BJ (cell line): ENCODE measurements at regions of chr1 and their contacts with region 1.

Region 1: GRCh38 chr1:7042322-7043190 is 257.3 kb downstream of the CAMTA1 start:
- DNase-seq: no peak
- H3K4me3 ChIP-seq: no peak overlapping the region
- H3K27me3 ChIP-seq: peaks cover 2% of the 10 kb centered on the region
- CTCF ChIP-seq: peak; percentile 52

Region 2: DNA sequence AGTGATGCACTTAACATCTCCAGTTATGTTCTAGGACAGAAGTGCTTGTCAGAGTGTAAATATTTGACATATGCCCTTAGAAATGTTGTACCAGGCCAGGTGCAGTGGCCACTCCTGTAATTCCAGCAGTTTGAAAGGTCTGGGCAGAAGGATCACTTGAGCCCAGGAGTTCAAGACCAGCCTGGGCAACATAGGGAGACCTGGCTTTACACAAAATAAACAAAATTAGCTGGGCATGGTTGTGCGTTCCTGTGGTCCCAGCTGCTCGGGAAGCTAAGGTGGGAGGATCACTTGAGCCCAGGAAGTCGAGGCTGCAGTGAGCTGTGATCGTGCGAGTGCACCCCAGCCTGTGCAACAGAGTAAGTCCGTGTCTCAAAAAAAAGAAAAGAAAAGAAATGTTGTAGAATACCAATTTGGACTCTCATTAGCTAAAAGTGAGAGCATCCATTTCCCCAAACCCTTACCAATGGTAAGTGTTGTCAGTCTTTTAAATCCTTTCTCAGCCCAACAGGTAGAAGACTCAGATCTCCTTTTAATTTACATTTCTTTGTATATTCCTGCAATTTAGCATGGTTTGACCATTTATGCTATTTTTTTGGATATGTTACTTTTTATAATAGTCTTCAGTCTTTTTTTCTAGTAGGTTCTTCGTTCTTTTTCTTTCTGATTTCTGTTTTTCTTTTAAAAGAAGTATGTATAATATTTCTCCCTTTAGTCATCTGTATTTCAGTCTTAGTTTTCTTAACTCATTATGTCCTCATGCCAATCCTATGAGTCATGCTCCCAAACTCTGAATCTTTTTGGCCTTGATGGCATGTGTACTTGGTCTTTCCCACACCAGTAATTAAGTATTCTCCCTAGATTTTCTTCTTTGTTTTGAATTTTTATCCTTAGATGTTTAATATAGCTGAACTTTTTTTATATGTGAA is 182.9 kb before region 1 on chr1:
- CTCF ChIA-PET with region 1: no interaction called
- POLR2A ChIA-PET with region 1: no interaction called
- DNase-seq: peak; percentile 92
- H3K4me3 ChIP-seq: no peak overlapping the region
- H3K27me3 ChIP-seq: no peaks in the 10 kb centered on the region
- CTCF ChIP-seq: no peak

Region 3: GRCh38 chr1:7013833-7014639 is 28.5 kb before region 1 on chr1:
- CTCF ChIA-PET with region 1: no interaction called
- POLR2A ChIA-PET with region 1: no interaction called
- DNase-seq: no peak
- H3K4me3 ChIP-seq: no peak overlapping the region
- H3K27me3 ChIP-seq: no peaks in the 10 kb centered on the region
- CTCF ChIP-seq: no peak

Region 4: GRCh38 chr1:7026169-7026568 is 16.4 kb before region 1 on chr1:
- CTCF ChIA-PET with region 1: interaction called, 19 read pairs
- POLR2A ChIA-PET with region 1: no interaction called
- DNase-seq: no peak
- H3K4me3 ChIP-seq: no peak overlapping the region
- H3K27me3 ChIP-seq: no peaks in the 10 kb centered on the region
- CTCF ChIP-seq: no peak

Region 5: GRCh38 chr1:7207875-7208646 is 165.5 kb after region 1 on chr1:
- CTCF ChIA-PET with region 1: interaction called, 20 read pairs
- POLR2A ChIA-PET with region 1: no interaction called
- DNase-seq: no peak
- H3K4me3 ChIP-seq: no peak overlapping the region
- H3K27me3 ChIP-seq: no peaks in the 10 kb centered on the region
- CTCF ChIP-seq: peak; percentile 68

Region 6: DNA sequence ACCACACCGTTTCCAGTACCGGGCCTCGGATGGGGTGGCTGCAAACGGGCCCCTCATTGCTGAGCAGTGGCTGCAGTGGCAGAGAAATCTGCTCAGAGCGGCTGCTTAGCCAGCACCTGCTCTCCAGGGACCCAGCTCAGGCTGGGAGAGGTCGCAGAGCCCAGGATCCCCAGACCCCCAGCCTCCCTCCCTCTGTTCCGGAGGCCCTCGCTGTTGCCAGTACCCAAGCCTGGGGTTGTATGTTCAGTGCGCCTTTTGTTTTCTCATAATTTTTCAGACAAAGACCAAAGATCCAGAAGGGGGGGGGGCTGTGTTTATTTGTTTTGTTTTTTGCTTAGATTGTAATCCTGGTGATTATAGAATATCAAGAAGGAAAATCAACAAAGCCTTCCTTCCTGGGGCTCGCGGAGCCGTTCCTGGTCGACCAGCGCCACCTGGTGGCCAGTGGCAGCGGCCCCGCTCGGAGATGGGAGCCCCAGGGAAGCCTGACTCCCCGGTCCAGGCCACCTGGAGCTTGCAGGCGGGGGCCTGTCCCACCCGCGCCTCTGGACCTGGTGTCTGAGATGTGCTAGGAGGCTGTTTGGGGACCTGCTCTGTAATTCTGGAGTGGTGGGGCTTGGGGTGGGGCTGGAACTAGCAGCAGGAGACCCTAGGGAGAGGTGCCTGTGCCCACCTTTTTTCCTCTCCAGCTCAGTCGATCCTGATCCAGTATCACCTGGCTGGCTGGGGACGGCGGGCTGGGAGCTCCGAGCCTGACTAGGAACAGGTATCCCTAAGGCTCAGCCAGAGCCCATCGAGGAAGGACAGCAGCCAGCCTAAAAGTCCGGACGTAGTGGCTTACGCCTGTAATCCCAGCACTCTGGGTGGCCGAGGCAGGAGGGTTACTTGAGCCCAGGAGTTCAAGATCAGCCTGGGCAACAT is 604.7 kb after region 1 on chr1:
- CTCF ChIA-PET with region 1: interaction called, 49 read pairs
- POLR2A ChIA-PET with region 1: no interaction called
- DNase-seq: no peak
- H3K4me3 ChIP-seq: no peak overlapping the region
- H3K27me3 ChIP-seq: peaks cover 2% of the 10 kb centered on the region
- CTCF ChIP-seq: peak; percentile 94